B cell (primary cell): ENCODE measurements at regions of chr6 and their contacts with region 1.

Region 1: DNA sequence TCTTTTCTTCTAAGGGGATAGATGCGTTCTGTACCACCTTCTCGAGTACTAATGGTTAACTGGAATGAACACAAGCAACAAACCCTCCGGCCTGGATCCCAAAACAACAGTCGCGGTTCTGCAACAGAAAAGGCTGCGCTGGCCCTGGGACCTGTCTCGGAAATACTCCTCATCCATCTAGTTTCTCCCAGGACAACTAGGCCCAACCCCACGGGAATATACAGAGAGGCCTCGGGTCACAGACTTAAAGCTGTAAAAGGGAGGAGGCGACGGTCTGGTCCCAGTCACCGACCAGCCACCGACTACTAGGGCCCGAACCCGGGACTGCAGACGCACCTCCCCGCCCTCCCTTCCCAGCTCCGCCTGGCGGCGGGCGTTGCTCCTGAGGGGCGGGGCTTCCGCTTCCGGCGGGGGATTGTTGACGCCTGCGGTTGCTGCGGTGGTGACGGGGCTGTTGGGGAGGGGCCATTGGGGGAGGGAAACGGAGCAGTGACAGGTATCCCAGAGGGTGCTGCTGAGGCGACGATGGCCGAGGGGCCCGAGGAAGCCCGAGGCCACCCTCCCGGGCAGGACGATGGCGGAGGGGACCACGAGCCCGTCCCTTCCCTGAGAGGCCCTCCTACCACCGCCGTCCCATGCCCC is at the start of gene FAM8A1:
- DNase-seq: peak; percentile 93
- ATAC-seq: peak; percentile 90
- H3K4me3 ChIP-seq: peak within 1 kb of the TSS; percentile 51 to 84 (median 79)
- H3K4me3 Mint-ChIP-seq: peak within 1 kb of the TSS; percentile 91
- H3K27ac ChIP-seq: peak within 1 kb of the TSS; percentile 54 to 74
- H3K27ac Mint-ChIP-seq: peak within 1 kb of the TSS; percentile 86
- H3K4me1 ChIP-seq: peaks cover 13% of the 10 kb centered on the region in 2 donors
- H3K4me1 Mint-ChIP-seq: peaks cover 10% of the 10 kb centered on the region
- H3K27me3 ChIP-seq: no peaks in the 10 kb centered on the region
- H3K27me3 Mint-ChIP-seq: no peaks in the 10 kb centered on the region
- CTCF ChIP-seq: peak; percentile 41
- total RNA-seq, gene FAM8A1: 5.2 and 7.0 TPM in 2 replicates

Region 2: GRCh38 chr6:17653198-17653882 is 53.3 kb after region 1 on chr6:
- CTCF ChIA-PET with region 1: no interaction called
- POLR2A ChIA-PET with region 1: no interaction called
- intact Hi-C with region 1: no loop called
- DNase-seq: no peak
- ATAC-seq: no peak
- H3K4me3 ChIP-seq: no peak overlapping the region
- H3K4me3 Mint-ChIP-seq: no peak overlapping the region
- H3K27ac ChIP-seq: no peak overlapping the region
- H3K27ac Mint-ChIP-seq: no peak overlapping the region
- H3K4me1 ChIP-seq: no peaks in the 10 kb centered on the region
- H3K4me1 Mint-ChIP-seq: peaks cover 3% of the 10 kb centered on the region
- H3K27me3 ChIP-seq: no peaks in the 10 kb centered on the region
- H3K27me3 Mint-ChIP-seq: no peaks in the 10 kb centered on the region
- CTCF ChIP-seq: no peak

Region 3: GRCh38 chr6:17666646-17667045 is 66.6 kb after region 1 on chr6:
- CTCF ChIA-PET with region 1: no interaction called
- POLR2A ChIA-PET with region 1: no interaction called
- intact Hi-C with region 1: loop called (anchors 10 kb)
- DNase-seq: no peak
- ATAC-seq: no peak
- H3K4me3 ChIP-seq: no peak overlapping the region
- H3K4me3 Mint-ChIP-seq: no peak overlapping the region
- H3K27ac ChIP-seq: no peak overlapping the region
- H3K27ac Mint-ChIP-seq: no peak overlapping the region
- H3K4me1 ChIP-seq: no peaks in the 10 kb centered on the region
- H3K4me1 Mint-ChIP-seq: no peaks in the 10 kb centered on the region
- H3K27me3 ChIP-seq: no peaks in the 10 kb centered on the region
- H3K27me3 Mint-ChIP-seq: no peaks in the 10 kb centered on the region
- CTCF ChIP-seq: no peak